ENCODE measurements at regions of chr5 and their contacts with region 1.

Region 1: GRCh38 chr5:139648205-139649081 is at the start of gene CXXC5:
- DNase-seq: peak; percentile 77 to 89 (median 85)
- H3K4me3 ChIP-seq: peak within 1 kb of the TSS; percentile 52 to 99 (median 72)
- H3K27ac ChIP-seq: peak within 1 kb of the TSS in 4 of 5 donors; percentile 32 to 95 (median 92)
- H3K4me1 ChIP-seq: peaks cover 46 to 48% of the 10 kb centered on the region in 2 donors
- H3K27me3 ChIP-seq: no peaks in the 10 kb centered on the region
- CTCF ChIP-seq: no peak
- POLR2A ChIP-seq: peak; percentile 85
- total RNA-seq, gene CXXC5: 16.2 to 79.3 (median 37.0) TPM

Region 2: DNA sequence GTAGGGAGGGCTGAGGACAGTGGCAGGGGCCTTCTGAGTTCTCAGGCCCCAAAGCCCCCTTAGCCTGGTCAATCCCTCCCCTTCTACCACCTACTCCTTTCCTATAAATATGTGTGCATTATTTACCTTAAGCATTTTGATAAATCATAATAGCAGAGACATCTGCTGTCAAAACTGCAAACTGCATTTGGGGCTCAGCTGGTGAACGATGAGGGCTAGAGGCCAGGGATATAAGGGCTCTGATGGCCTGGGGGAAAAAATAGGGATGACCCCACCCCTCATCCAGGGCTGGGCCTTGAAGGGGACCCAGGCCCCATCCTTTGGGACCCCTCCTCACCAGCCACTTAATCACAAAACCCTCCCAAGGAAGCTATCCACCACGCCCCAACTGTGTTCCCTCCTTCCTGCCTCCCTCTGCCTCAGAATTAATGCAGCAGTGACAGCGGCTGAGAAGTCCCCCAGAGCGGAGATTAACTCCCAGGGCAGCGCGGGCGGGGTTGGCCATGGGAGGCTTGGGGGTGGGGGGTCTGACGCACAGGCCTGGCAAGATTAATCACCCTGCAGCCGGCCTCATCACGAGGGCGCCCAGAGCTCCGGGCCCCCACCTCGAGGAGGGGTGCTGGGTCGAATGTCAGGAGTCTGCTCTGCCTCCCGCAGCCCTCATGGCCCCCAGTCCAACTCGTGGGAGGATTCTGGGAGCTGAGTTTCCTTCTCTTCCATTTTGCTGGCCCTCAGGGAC is 41.8 kb after region 1 on chr5:
- intact Hi-C with region 1: loop called in 1 of 2 experiments (anchors 5 kb)
- DNase-seq: peak in 4 of 7 donors; percentile 37 to 66 (median 56)
- H3K4me3 ChIP-seq: no peak overlapping the region
- H3K27ac ChIP-seq: peak overlapping the region in 1 of 5 donors; percentile 49
- H3K4me1 ChIP-seq: peaks cover 10 to 26% of the 10 kb centered on the region in 2 donors
- H3K27me3 ChIP-seq: no peaks in the 10 kb centered on the region
- CTCF ChIP-seq: peak in 5 of 6 experiments; percentile 36 to 66 (median 48)
- POLR2A ChIP-seq: no peak

Measured in adrenal gland (tissue), 19 donors.